Breast epithelium (tissue), 4 donors: ENCODE measurements at regions of chr18 and their contacts with region 1.

Region 1: DNA sequence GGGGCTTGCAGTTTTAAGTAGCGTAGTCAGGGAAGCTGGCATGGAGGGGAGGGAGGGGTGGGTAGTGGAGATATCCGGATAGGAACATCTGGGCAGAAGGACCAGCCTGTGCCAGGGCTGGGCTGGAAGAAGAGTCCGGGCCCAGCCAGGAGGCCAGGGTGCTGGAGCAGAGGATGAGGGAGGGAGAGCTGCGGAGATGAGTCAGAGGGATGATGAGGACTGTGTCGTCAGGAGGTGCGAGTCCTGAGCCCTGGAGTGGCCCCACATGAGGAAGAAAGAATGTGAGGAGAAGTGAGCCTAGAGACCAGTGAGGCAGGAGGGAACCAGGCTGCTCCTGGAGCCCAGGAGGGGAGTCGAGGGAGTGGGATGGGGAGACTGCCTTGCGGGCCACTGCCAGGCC is 82.4 kb downstream of the CTIF start:
- DNase-seq: no peak
- H3K4me3 ChIP-seq: no peak overlapping the region
- H3K27ac ChIP-seq: no peak overlapping the region
- H3K4me1 ChIP-seq: peaks cover 0 to under 1% of the 10 kb centered on the region in 2 donors
- H3K27me3 ChIP-seq: no peaks in the 10 kb centered on the region
- CTCF ChIP-seq: no peak
- POLR2A ChIP-seq: no peak

Region 2: GRCh38 chr18:48534364-48534763 is 86.9 kb before region 1 on chr18:
- intact Hi-C with region 1: loop called (anchors 1 kb)
- DNase-seq: no peak
- H3K4me3 ChIP-seq: no peak overlapping the region
- H3K27ac ChIP-seq: no peak overlapping the region
- H3K4me1 ChIP-seq: no peaks in the 10 kb centered on the region
- H3K27me3 ChIP-seq: no peaks in the 10 kb centered on the region
- CTCF ChIP-seq: no peak
- POLR2A ChIP-seq: no peak

Region 3: DNA sequence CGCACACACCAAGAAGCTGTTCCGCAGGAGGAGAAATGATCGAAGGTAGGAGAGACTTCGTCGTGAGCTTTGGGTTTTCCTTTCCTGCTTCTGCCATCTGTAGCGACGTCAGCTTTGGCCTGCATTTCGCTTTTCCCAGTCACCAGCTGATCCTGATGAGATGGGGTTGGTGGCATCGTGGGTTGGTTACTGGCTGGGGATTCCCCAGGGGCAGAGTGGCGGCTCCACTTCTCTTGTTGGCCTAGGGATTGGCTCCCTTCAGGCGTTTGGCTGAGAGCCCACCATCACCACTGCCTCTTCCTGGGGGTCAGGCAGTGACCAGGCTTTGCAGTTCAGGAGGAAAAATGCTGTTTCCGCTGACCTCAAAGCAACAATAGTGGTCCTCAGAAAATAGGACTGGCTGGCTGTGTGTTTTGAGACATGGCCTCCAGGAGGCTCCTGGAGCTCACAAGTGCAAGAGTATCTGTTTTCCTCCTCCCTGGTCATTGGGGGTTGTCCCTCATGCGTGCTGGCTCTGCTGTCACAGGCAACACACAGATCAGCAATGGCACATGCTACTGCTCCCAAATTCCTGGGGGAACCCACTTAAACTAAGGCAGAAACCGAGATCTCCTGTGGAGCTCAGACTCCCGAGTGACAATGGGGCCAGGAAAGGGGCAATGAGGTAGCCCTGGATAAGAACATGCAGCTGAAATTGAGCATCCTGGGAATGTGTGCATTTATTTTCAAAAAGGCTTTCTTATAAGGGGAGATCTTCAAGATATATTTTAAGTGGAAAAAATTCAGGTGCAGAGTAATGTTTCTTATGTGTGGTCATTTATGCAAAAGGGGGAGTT is 90.6 kb after region 1 on chr18:
- intact Hi-C with region 1: no loop called
- DNase-seq: no peak
- H3K4me3 ChIP-seq: no peak overlapping the region
- H3K27ac ChIP-seq: no peak overlapping the region
- H3K4me1 ChIP-seq: no peaks in the 10 kb centered on the region
- H3K27me3 ChIP-seq: no peaks in the 10 kb centered on the region
- CTCF ChIP-seq: peak in 2 of 3 donors; percentile 42 to 51
- POLR2A ChIP-seq: no peak